Mammary epithelial cell (primary cell): ENCODE measurements at regions of chr22 and their contacts with region 1.

Region 1: GRCh38 chr22:43969989-43970755 is 14.9 kb downstream of the SAMM50 start:
- DNase-seq: no peak
- H3K4me3 ChIP-seq: no peak overlapping the region
- H3K27ac ChIP-seq: no peak overlapping the region
- H3K4me1 ChIP-seq: no peaks in the 10 kb centered on the region
- H3K27me3 ChIP-seq: no peaks in the 10 kb centered on the region
- CTCF ChIP-seq: no peak

Region 2: DNA sequence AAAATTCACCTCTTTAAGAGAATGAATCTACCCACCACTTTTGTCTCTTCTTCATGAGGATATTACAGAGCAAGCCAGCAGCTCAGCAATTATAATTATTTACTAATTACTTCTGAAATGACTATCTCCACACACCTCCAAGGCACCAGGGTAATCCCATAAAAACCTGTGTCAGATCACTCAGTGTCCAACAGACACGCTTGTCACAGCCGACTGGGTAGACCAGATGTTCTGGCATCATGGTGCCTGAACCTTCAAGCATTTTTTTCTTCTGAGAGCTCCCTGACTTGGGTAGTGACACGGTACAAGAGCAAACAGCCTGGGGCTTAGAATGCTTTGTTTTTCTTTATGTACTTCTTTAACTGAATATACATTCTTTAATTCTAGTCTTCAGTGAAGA is 219.4 kb before region 1 on chr22:
- CTCF ChIA-PET with region 1: no interaction called
- dilution Hi-C with region 1: no loop called
- in situ Hi-C with region 1: no loop called
- intact Hi-C with region 1: no loop called
- DNase-seq: no peak
- H3K4me3 ChIP-seq: no peak overlapping the region
- H3K27ac ChIP-seq: no peak overlapping the region
- H3K4me1 ChIP-seq: peaks cover 5% of the 10 kb centered on the region
- H3K27me3 ChIP-seq: peaks cover 4% of the 10 kb centered on the region
- CTCF ChIP-seq: no peak

Region 3: GRCh38 chr22:43812149-43812842 is 157.9 kb before region 1 on chr22 and contains the start of gene EFCAB6:
- CTCF ChIA-PET with region 1: no interaction called
- dilution Hi-C with region 1: no loop called
- in situ Hi-C with region 1: no loop called
- intact Hi-C with region 1: no loop called
- DNase-seq: peak; percentile 87
- H3K4me3 ChIP-seq: peak within 1 kb of the TSS; percentile 63 to 89 (median 73)
- H3K27ac ChIP-seq: peak within 1 kb of the TSS; percentile 71
- H3K4me1 ChIP-seq: peaks cover 17% of the 10 kb centered on the region
- H3K27me3 ChIP-seq: no peaks in the 10 kb centered on the region
- CTCF ChIP-seq: no peak
- total RNA-seq, gene EFCAB6: 0.59 to 2.0 TPM

Region 4: GRCh38 chr22:43884600-43885325 is 85.4 kb before region 1 on chr22:
- CTCF ChIA-PET with region 1: no interaction called
- dilution Hi-C with region 1: loop called (anchors 5 kb)
- in situ Hi-C with region 1: no loop called
- intact Hi-C with region 1: no loop called
- DNase-seq: peak; percentile 23
- H3K4me3 ChIP-seq: no peak overlapping the region
- H3K27ac ChIP-seq: no peak overlapping the region
- H3K4me1 ChIP-seq: no peaks in the 10 kb centered on the region
- H3K27me3 ChIP-seq: no peaks in the 10 kb centered on the region
- CTCF ChIP-seq: peak; percentile 76 to 89

Region 5: DNA sequence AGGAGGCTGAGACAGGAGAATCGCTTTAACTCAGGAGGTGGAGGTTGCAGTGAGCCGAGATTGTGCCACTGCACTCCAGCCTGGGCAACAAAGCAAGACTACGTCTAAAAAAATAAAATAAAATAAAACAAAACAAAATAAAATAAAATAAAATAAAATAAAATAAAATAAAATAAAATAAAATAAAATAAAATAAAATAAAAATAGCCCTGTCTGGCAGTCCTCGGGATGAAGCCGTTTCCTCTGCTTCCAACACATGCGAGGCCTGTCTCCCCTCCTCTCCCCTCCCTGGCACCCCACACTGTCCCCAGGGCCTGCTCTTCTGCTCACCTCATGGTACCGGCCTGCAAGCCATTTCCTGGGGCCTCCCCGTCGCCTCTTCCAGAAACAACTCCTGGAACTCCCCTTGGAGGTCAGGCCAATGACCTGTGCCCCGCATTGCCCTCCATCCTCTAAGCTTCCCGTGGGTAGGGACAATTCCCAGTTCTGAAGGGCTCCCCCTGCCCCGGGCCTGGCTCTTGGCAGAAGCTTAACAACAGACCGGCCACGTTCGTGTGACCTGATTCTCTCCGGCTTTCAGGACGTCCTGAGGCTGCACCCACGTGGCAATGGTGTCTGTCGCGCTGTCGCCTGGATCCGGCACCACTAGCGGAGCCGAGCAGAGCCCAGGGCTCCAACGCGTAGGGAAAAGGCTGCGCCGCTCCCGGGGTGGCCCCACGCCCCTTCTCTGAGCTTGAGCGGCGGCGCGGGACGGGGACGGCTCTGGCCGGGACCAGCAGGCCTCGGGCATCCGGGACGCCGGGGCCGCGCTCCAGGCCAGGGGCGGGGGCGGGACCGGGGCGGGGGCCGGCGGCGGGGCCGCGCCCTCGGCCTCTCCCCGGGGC is 53.5 kb after region 1 on chr22:
- CTCF ChIA-PET with region 1: no interaction called
- dilution Hi-C with region 1: loop called (anchors 5 kb)
- in situ Hi-C with region 1: no loop called
- intact Hi-C with region 1: no loop called
- DNase-seq: peak; percentile 11
- H3K4me3 ChIP-seq: peak overlapping the region; percentile 59 to 71 (median 60)
- H3K27ac ChIP-seq: no peak overlapping the region
- H3K4me1 ChIP-seq: peaks cover 9% of the 10 kb centered on the region
- H3K27me3 ChIP-seq: no peaks in the 10 kb centered on the region
- CTCF ChIP-seq: no peak